GM12878 (cell line): ENCODE measurements at regions of chr4 and their contacts with region 1.

Region 1: GRCh38 chr4:15655229-15656037 is at the start of gene FBXL5:
- DNase-seq: peak; percentile 36
- ATAC-seq: peak; percentile 64
- H3K4me3 ChIP-seq: peak within 1 kb of the TSS; percentile 84
- H3K27ac ChIP-seq: peak within 1 kb of the TSS; percentile 95
- H3K4me1 ChIP-seq: peaks cover 15% of the 10 kb centered on the region
- H3K27me3 ChIP-seq: no peaks in the 10 kb centered on the region
- CTCF ChIP-seq: no peak
- EP300 ChIP-seq: no peak
- POLR2A ChIP-seq: peak; percentile 88
- RAD21 ChIP-seq: no peak
- polyA plus RNA-seq, gene FBXL5: 10.1 to 12.3 TPM

Region 2: GRCh38 chr4:15084780-15085179 is 570.7 kb before region 1 on chr4:
- CTCF ChIA-PET with region 1: no interaction called
- POLR2A ChIA-PET with region 1: no interaction called
- RAD21 ChIA-PET with region 1: no interaction called
- SMC1A ChIA-PET with region 1: no interaction called
- in situ Hi-C with region 1: no loop called
- intact Hi-C with region 1: no loop called
- DNase-seq: no peak
- ATAC-seq: no peak
- H3K4me3 ChIP-seq: no peak overlapping the region
- H3K27ac ChIP-seq: no peak overlapping the region
- H3K4me1 ChIP-seq: no peaks in the 10 kb centered on the region
- H3K27me3 ChIP-seq: no peaks in the 10 kb centered on the region
- CTCF ChIP-seq: no peak
- EP300 ChIP-seq: no peak
- POLR2A ChIP-seq: no peak
- RAD21 ChIP-seq: no peak

Region 3: GRCh38 chr4:15542795-15543194 is 112.6 kb before region 1 on chr4:
- CTCF ChIA-PET with region 1: no interaction called
- POLR2A ChIA-PET with region 1: no interaction called
- RAD21 ChIA-PET with region 1: no interaction called
- SMC1A ChIA-PET with region 1: no interaction called
- in situ Hi-C with region 1: no loop called
- intact Hi-C with region 1: no loop called
- DNase-seq: no peak
- ATAC-seq: no peak
- H3K4me3 ChIP-seq: no peak overlapping the region
- H3K27ac ChIP-seq: no peak overlapping the region
- H3K4me1 ChIP-seq: no peaks in the 10 kb centered on the region
- H3K27me3 ChIP-seq: no peaks in the 10 kb centered on the region
- CTCF ChIP-seq: no peak
- EP300 ChIP-seq: no peak
- POLR2A ChIP-seq: no peak
- RAD21 ChIP-seq: no peak

Region 4: DNA sequence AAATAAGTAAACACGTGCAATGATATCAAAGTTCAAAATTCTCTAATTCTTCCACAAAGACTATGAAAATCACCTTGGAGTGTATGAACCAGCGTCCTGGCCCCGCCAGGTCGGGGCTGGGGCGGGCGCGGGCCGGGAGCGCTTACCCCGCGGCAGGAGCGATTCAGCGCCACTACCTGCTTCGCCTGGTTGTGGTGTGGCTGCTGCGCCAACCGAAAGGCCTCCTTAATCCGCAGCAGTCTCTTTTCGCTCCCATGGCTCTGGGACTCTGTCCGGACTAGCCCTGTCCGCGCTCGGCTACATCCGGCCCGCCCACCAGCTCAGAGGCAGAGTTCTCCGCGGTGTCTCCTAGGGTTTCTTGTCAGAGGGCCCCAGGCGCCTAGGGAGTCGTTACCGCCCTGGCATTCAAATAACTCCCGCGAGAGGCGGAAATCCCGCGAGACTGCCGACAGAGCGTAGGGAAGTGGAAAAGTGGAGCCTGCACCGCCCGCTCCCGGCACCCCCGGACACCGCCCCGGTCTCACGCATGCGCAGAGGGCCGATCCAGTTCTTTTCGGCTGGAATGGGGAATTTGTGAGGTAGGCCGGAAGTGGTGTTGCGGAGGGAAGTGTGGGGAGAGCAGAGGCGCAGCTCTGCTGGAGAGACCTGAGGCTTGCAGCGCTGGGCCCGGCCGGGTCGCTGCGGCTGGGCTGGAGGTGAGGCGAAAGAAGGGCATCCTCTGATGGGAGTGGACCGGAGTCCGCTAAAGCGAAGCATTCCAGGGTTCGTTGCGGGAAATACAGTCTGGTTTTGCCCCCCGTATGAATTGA is 26.0 kb after region 1 on chr4 and contains the start of gene FAM200B:
- CTCF ChIA-PET with region 1: interaction called, 23 read pairs
- POLR2A ChIA-PET with region 1: interaction called, 15 read pairs
- RAD21 ChIA-PET with region 1: interaction called, 15 read pairs
- SMC1A ChIA-PET with region 1: interaction called, 34 read pairs
- in situ Hi-C with region 1: no loop called
- intact Hi-C with region 1: loop called (anchors 1 kb)
- DNase-seq: peak; percentile 93
- ATAC-seq: peak; percentile 89
- H3K4me3 ChIP-seq: peak within 1 kb of the TSS; percentile 75
- H3K27ac ChIP-seq: peak within 1 kb of the TSS; percentile 94
- H3K4me1 ChIP-seq: peaks cover 9% of the 10 kb centered on the region; the same call in 1 of the 2 replicates
- H3K27me3 ChIP-seq: no peaks in the 10 kb centered on the region
- CTCF ChIP-seq: peak in 1 of 3 experiments; percentile 10; a peak in 1 of 6 replicates
- EP300 ChIP-seq: no peak
- POLR2A ChIP-seq: peak; percentile 89
- RAD21 ChIP-seq: no peak
- polyA plus RNA-seq, gene FAM200B: 24.4 to 27.0 TPM